HEK293 (cell line): ENCODE measurements at regions of chr17 and their contacts with region 1.

Region 1: GRCh38 chr17:35373534-35373983 is at the start of gene SLFN11:
- H3K4me3 ChIP-seq: peak within 1 kb of the TSS; percentile 88
- H3K27ac ChIP-seq: peak within 1 kb of the TSS; percentile 100
- H3K4me1 ChIP-seq: peaks cover 10% of the 10 kb centered on the region
- CTCF ChIP-seq: no peak

Region 2: GRCh38 chr17:35242805-35243560 is 130.6 kb before region 1 on chr17 and contains the start of gene SLFN5:
- CTCF ChIA-PET with region 1: no interaction called
- POLR2A ChIA-PET with region 1: interaction called, 17 read pairs
- H3K4me3 ChIP-seq: peak within 1 kb of the TSS; percentile 76
- H3K27ac ChIP-seq: peak within 1 kb of the TSS; percentile 93
- H3K4me1 ChIP-seq: peaks cover 23% of the 10 kb centered on the region
- CTCF ChIP-seq: peak; percentile 37

Region 3: DNA sequence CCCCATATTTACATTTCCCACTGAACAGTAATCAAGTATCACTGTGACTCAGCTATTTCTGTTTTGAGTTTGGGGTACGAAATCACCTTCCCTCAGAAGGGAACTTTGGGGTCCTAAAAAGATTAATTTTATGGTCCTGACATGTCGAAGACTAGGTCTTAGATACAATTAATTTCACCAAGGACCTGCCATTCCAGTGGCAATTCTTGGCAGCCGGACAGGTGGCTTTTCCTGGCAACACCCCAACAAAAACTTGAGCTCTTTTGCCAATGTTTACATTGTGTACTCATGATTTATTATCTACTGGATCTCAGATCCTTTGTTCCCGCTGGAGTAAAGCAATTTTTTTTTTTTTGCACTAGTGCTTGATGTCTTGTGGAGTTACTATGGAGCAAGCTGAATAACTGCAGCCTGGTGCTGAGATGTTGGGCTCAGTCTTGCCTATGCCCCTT is 116.3 kb before region 1 on chr17:
- CTCF ChIA-PET with region 1: no interaction called
- POLR2A ChIA-PET with region 1: interaction called, 11 read pairs
- H3K4me3 ChIP-seq: no peak overlapping the region
- H3K27ac ChIP-seq: no peak overlapping the region
- H3K4me1 ChIP-seq: peaks cover 22% of the 10 kb centered on the region
- CTCF ChIP-seq: no peak

Region 4: GRCh38 chr17:35432176-35433074 is 58.9 kb after region 1 on chr17 and contains the start of gene SLFN12:
- CTCF ChIA-PET with region 1: interaction called, 5 read pairs
- POLR2A ChIA-PET with region 1: interaction called, 54 read pairs
- H3K4me3 ChIP-seq: peak within 1 kb of the TSS; percentile 49
- H3K27ac ChIP-seq: peak within 1 kb of the TSS; percentile 83
- H3K4me1 ChIP-seq: peaks cover 14% of the 10 kb centered on the region
- CTCF ChIP-seq: no peak

Region 5: DNA sequence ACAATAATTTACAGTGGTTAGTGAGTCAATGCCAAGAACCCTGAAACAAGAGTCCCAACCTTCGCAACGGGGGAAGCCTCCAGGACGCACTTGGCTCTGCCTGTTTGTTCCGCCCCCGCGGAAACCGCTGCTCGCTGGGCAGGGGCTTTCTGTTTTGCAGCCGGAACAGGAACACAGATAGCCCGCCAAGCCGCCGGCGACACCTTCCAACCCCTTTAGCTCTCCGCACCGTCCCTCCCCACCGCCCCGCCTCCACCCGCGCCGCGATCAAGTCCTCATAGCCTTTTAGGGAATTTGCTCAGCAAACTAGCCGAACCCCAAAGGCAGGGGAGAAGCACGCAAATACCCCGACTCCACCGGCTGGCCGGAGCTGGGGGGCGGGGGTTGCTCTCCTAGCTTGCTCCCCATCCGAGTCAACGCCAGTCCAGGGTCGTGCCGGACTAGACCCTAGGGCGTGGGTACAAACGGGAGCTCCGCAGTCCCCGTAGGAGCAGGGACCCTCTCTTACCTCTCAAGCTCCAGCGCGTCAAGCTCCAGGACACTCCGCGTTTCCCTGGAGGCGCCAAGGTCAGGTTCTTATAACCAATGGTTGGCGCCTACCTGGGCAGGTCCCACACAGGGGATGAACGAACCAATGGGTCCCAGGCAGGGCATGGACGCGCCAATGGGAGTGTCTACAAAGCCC is 74.8 kb after region 1 on chr17 and contains the start of gene SLFN13:
- CTCF ChIA-PET with region 1: no interaction called
- POLR2A ChIA-PET with region 1: interaction called, 23 read pairs
- H3K4me3 ChIP-seq: peak within 1 kb of the TSS; percentile 54
- H3K27ac ChIP-seq: peak within 1 kb of the TSS; percentile 38; the same call in 1 of the 2 replicates
- H3K4me1 ChIP-seq: no peaks in the 10 kb centered on the region
- CTCF ChIP-seq: no peak

Region 6: DNA sequence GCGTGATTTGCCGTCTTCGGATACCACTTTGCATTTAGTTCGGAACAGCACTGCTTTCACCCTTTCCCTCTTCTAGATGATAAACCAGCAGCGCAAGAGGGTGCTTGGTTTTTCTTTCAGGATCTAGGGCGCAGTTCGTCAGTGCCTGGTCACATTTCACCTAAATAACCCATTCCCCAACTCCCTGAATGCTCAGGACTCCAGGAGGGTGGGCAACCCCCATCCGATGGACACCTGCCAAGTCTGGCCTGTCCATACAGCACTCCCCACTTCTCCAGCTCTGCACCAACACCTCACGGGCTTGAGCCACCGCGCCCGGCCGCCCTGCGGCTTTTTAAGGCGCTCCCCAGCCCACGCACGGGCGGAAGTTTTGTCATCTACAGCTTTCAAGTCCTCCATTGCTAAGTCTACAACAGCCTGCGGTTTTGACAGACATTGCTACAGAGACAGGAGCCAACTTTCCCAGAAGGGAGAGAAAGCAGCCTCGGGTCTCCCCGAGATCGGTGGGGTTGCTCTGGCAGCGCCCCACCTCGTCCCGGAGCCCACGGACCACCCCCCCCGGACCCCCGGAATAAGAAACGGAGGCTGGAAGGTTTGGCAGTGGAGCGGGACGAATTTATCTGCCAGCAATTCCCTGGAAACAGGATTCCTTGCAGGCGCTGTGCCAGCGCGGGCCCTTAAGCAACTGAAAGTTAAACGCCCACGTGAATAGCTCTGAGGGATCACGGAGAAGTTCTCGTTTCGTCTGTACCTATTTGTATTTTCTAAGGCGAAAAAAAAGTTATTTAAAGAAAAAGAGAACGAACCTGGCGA is 113.6 kb after region 1 on chr17:
- CTCF ChIA-PET with region 1: no interaction called
- POLR2A ChIA-PET with region 1: interaction called, 14 read pairs
- H3K4me3 ChIP-seq: peak overlapping the region; percentile 42
- H3K27ac ChIP-seq: no peak overlapping the region; the same call in 1 of the 2 replicates
- H3K4me1 ChIP-seq: no peaks in the 10 kb centered on the region
- CTCF ChIP-seq: no peak

Region 7: DNA sequence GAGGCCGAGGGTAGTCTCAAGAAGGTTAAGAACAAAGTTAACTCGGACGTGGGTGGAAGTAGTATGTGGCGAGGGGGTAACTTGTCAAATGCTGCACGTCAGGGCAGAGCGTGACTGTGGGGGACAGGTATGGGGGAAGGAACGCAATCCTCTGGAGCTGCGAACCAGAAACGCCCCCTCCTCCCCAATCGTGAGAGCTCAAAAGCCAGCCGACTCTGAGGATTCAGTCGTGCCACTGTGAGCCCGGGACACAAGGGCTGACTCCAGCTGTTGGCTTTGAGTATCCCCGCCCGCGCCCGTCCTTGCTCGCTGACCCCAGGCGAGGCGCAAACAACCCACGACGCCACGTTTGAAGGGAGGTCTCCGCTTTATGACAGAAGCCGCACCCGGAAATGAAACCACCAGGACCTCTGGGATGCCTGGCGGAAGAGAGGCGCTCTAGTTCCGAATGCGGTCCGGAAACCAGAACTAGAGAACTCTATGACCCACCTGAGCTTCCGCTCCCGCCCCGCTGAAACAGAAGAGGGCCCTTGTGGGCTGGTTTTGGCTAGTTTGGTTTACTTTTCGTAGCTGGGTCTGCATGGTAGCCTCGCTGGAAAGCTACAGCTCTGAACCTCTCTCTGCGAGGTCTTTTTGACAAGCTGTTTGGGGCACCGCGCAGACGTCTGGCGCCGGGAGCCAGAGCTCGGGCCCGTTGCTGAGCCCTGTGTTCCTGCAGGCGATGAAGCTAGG is 204.8 kb after region 1 on chr17 and contains the start of gene PEX12:
- CTCF ChIA-PET with region 1: no interaction called
- POLR2A ChIA-PET with region 1: interaction called, 12 read pairs
- H3K4me3 ChIP-seq: peak within 1 kb of the TSS; percentile 88
- H3K27ac ChIP-seq: peak within 1 kb of the TSS; percentile 91
- H3K4me1 ChIP-seq: peaks cover 5% of the 10 kb centered on the region; the same call in 1 of the 2 replicates
- CTCF ChIP-seq: peak; percentile 39; the same call in 1 of the 2 replicates